Spleen (tissue), 13 donors: ENCODE measurements at regions of chr16 and their contacts with region 1.

Region 1: GRCh38 chr16:10737068-10737625 is 6.5 kb upstream of the NUBP1 start:
- DNase-seq: no peak
- H3K4me3 ChIP-seq: peak overlapping the region in 5 of 8 donors; percentile 2 to 49 (median 4)
- H3K27ac ChIP-seq: peak overlapping the region; percentile 53 to 84 (median 77)
- H3K4me1 ChIP-seq: peaks cover 9 to 43% (median 23%) of the 10 kb centered on the region in 6 donors
- H3K27me3 ChIP-seq: no peaks in the 10 kb centered on the region
- CTCF ChIP-seq: peak; percentile 90 to 98 (median 96)
- POLR2A ChIP-seq: no peak

Region 2: GRCh38 chr16:10521681-10522274 is 215.4 kb before region 1 on chr16:
- intact Hi-C with region 1: loop called (anchors 2 kb)
- DNase-seq: no peak
- H3K4me3 ChIP-seq: no peak overlapping the region
- H3K27ac ChIP-seq: no peak overlapping the region
- H3K4me1 ChIP-seq: peaks cover 0 to 7% (median 0%) of the 10 kb centered on the region in 6 donors
- H3K27me3 ChIP-seq: no peaks in the 10 kb centered on the region
- CTCF ChIP-seq: peak; percentile 49 to 83 (median 70)
- POLR2A ChIP-seq: no peak

Region 3: GRCh38 chr16:10541366-10541765 is 195.8 kb before region 1 on chr16:
- intact Hi-C with region 1: no loop called
- DNase-seq: no peak
- H3K4me3 ChIP-seq: no peak overlapping the region
- H3K27ac ChIP-seq: no peak overlapping the region
- H3K4me1 ChIP-seq: no peaks in the 10 kb centered on the region
- H3K27me3 ChIP-seq: no peaks in the 10 kb centered on the region
- CTCF ChIP-seq: no peak
- POLR2A ChIP-seq: no peak

Region 4: GRCh38 chr16:10776280-10776679 is 39.1 kb after region 1 on chr16:
- intact Hi-C with region 1: no loop called
- DNase-seq: no peak
- H3K4me3 ChIP-seq: no peak overlapping the region
- H3K27ac ChIP-seq: no peak overlapping the region
- H3K4me1 ChIP-seq: peaks cover 0 to 30% (median 11%) of the 10 kb centered on the region in 6 donors
- H3K27me3 ChIP-seq: no peaks in the 10 kb centered on the region
- CTCF ChIP-seq: no peak
- POLR2A ChIP-seq: no peak